Lower lobe of right lung (tissue), 2 donors: ENCODE measurements at regions of chr12 and their contacts with region 1.

Region 1: DNA sequence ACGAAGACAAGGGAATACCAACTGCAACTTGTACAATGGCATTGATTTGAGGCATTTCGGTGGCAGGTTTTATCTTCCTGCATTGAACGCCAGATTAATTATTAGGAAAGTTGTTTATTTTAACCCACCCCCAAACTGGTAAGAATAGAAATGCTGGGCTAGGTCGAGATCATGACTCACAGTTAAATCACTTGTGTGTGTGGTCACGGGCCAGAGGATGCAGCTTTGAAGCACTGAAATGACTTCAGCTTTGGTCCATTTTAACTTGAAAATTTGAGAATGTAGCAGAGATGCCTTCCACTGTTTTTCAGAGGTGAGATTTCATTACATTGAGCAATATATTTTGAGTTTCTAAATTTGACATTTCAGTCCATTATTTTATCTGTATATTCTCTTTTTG is 23.6 kb upstream of the KCNH3 start:
- DNase-seq: no peak
- ATAC-seq: no peak
- H3K4me3 ChIP-seq: no peak overlapping the region
- H3K27ac ChIP-seq: no peak overlapping the region
- H3K4me1 ChIP-seq: no peaks in the 10 kb centered on the region
- H3K27me3 ChIP-seq: no peaks in the 10 kb centered on the region
- CTCF ChIP-seq: no peak

Region 2: GRCh38 chr12:49358483-49359141 is 156.7 kb before region 1 on chr12:
- intact Hi-C with region 1: loop called (anchors 5 kb)
- DNase-seq: no peak
- ATAC-seq: peak; percentile 83 to 89
- H3K4me3 ChIP-seq: no peak overlapping the region
- H3K27ac ChIP-seq: no peak overlapping the region
- H3K4me1 ChIP-seq: no peaks in the 10 kb centered on the region
- H3K27me3 ChIP-seq: peaks cover 15% of the 10 kb centered on the region
- CTCF ChIP-seq: peak; percentile 68